ENCODE measurements at regions of chr19 and their contacts with region 1.

Region 1: DNA sequence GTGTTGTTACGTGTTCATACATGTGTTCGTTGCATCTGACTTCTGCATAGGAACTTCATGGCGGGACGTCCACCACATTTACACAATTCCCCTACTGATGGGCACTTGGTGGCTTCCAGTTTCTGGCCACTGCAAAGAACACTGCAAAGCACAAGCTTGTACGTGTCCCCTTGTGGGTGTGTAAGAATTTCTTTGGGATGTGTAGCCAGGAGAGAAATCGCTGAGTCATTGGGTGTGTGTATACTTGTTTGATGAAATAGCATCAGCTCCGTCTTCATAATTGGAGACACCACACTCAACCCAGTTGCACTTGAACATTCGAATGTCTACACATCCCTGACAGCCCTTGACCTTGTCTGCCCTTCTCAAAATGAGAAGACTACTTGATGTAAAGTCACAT is 19.2 kb downstream of the KLK5 start:
- DNase-seq: no peak
- ATAC-seq: no peak
- H3K4me3 ChIP-seq: no peak overlapping the region
- H3K27ac ChIP-seq: no peak overlapping the region
- H3K4me1 ChIP-seq: no peaks in the 10 kb centered on the region
- H3K27me3 ChIP-seq: peaks cover 0 to 70% (median 39%) of the 10 kb centered on the region in 7 donors
- CTCF ChIP-seq: no peak

Region 2: GRCh38 chr19:51002542-51003171 is 69.0 kb after region 1 on chr19:
- intact Hi-C with region 1: loop called in 1 of 10 experiments (anchors 10 kb)
- DNase-seq: no peak
- ATAC-seq: no peak
- H3K4me3 ChIP-seq: no peak overlapping the region
- H3K27ac ChIP-seq: no peak overlapping the region
- H3K4me1 ChIP-seq: no peaks in the 10 kb centered on the region
- H3K27me3 ChIP-seq: peaks cover 6 to 83% (median 79%) of the 10 kb centered on the region in 7 donors
- CTCF ChIP-seq: no peak

Region 3: GRCh38 chr19:51097166-51097738 is 163.6 kb after region 1 on chr19:
- intact Hi-C with region 1: loop called in 9 of 10 experiments (anchors 2 to 10 kb)
- DNase-seq: peak; percentile 62 to 77
- ATAC-seq: peak in 7 of 8 donors; percentile 32 to 77 (median 63)
- H3K4me3 ChIP-seq: no peak overlapping the region
- H3K27ac ChIP-seq: no peak overlapping the region
- H3K4me1 ChIP-seq: peaks cover 0 to 30% (median 10%) of the 10 kb centered on the region in 9 donors
- H3K27me3 ChIP-seq: no peaks in the 10 kb centered on the region
- CTCF ChIP-seq: peak; percentile 23 to 69 (median 61)

Region 4: GRCh38 chr19:51166846-51167490 is 233.3 kb after region 1 on chr19:
- intact Hi-C with region 1: loop called in 3 of 10 experiments (anchors 5 to 10 kb)
- DNase-seq: no peak
- ATAC-seq: peak in 6 of 8 donors; percentile 58 to 79 (median 62)
- H3K4me3 ChIP-seq: no peak overlapping the region
- H3K27ac ChIP-seq: no peak overlapping the region
- H3K4me1 ChIP-seq: peaks cover 0 to 20% (median 0%) of the 10 kb centered on the region in 9 donors
- H3K27me3 ChIP-seq: peaks cover 0 to 38% (median 19%) of the 10 kb centered on the region in 7 donors
- CTCF ChIP-seq: no peak

Region 5: DNA sequence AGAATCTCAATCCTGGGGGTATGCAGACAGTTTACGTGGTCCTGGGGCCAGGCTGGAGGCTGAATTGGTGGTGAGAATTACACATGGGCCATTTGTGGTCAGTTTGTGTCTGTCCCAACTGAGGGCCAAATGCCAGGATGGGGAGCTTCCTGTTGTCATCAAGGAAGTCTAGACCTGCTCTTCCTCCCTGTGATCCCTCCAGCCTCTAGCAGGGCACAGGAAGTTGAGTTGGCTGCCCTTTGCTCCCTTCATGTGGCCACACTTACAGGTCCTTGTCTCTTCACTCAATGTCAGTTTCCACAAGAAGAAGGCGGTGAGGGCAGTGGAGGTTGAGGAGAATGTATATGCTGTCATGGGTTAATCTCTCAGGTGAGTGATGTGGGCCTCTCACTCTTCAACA is 238.6 kb after region 1 on chr19:
- intact Hi-C with region 1: loop called in 3 of 10 experiments (anchors 5 to 10 kb)
- DNase-seq: no peak
- ATAC-seq: no peak
- H3K4me3 ChIP-seq: no peak overlapping the region
- H3K27ac ChIP-seq: no peak overlapping the region
- H3K4me1 ChIP-seq: peaks cover 0 to 13% (median 0%) of the 10 kb centered on the region in 9 donors
- H3K27me3 ChIP-seq: peaks cover 0 to 63% (median 19%) of the 10 kb centered on the region in 7 donors
- CTCF ChIP-seq: no peak

Measured in heart right ventricle (tissue), 16 donors.